ENCODE measurements at regions of chr20 and their contacts with region 1.

Region 1: DNA sequence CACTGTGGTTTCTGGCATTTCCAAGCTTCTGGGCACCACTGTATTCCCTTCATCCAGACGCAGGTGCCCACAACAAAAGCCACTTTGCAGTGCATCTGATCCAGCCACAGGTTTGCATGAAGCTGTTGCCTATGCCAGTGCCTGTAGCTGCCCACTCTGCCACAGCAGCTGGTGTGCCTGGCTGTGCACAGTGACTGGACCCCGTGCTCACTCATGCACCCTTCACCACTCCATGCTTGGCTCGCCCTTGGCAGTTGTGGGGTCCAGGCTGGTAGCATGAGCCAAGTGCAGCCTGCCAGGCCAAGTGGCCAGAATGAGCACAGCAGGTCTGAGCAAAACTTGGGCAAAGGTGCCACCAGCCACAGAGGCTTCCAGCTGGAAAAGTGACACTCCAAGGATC is 42.7 kb downstream of the SEL1L2 start:
- DNase-seq: no peak
- H3K4me3 ChIP-seq: no peak overlapping the region
- H3K27ac ChIP-seq: no peak overlapping the region
- H3K4me1 ChIP-seq: no peaks in the 10 kb centered on the region
- H3K27me3 ChIP-seq: peaks cover 2% of the 10 kb centered on the region
- CTCF ChIP-seq: no peak

Region 2: DNA sequence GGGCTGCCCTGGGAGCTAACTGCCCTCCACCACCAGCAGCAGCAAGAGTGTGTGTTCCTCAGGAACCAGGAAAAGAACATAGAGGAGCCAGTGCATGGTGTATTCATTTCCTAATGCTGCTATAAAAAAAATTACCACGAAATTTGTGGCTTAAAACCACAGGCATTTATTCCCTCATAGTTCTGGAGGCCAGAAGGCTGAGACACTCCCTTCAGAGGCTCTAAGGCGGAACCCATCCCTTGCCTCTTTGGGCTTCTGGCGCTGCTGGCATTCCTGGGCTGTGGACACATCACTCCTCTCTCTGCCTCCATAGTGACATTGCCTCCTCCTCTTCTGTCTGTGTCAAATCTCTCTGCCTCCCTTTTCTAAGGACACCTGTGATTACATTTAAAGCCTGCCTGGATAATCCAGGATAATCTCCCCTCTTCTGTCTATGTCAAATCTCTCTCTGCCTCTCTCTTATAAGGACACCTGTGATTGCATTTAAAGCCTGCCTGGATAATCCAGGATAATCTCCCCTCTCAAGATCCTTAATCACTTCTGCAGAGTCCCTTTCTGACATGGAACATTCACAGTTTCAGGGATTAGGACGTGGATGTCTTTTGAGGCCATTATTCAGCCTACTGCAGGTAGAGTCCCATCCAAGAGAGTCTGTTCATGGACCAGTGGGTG is 108.2 kb before region 1 on chr20:
- CTCF ChIA-PET with region 1: no interaction called
- dilution Hi-C with region 1: loop called (anchors 5 kb)
- in situ Hi-C with region 1: no loop called
- intact Hi-C with region 1: no loop called
- DNase-seq: peak; percentile 77
- H3K4me3 ChIP-seq: no peak overlapping the region
- H3K27ac ChIP-seq: no peak overlapping the region
- H3K4me1 ChIP-seq: peaks cover 11% of the 10 kb centered on the region
- H3K27me3 ChIP-seq: peaks cover 3% of the 10 kb centered on the region
- CTCF ChIP-seq: no peak

Region 3: GRCh38 chr20:13898011-13898612 is 49.6 kb before region 1 on chr20:
- CTCF ChIA-PET with region 1: no interaction called
- dilution Hi-C with region 1: loop called (anchors 5 kb)
- in situ Hi-C with region 1: no loop called
- intact Hi-C with region 1: no loop called
- DNase-seq: peak; percentile 3
- H3K4me3 ChIP-seq: no peak overlapping the region
- H3K27ac ChIP-seq: no peak overlapping the region
- H3K4me1 ChIP-seq: no peaks in the 10 kb centered on the region
- H3K27me3 ChIP-seq: no peaks in the 10 kb centered on the region
- CTCF ChIP-seq: peak; percentile 12 to 34

Measured in mammary epithelial cell (primary cell).